Colonic mucosa (tissue), 4 donors: ENCODE measurements at regions of chr7 and their contacts with region 1.

Region 1: DNA sequence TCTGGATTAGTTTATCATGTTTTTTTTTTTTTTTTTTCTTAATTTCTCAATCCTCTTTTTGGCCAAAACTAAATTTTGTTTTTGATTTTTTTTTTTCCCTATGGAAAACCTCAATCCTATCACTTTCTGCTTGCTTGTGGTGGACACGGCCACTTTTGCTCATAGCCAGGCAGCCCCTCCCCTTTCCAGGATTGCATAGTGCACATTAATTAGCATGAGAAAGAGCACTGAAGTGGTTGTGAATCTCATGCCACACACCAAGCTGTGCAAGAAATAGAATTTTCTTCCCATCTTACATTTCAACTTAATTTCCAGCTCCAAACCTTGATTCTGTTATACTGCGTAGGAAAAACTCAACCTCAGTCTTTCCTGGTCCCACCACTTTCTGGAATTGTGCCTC is 34.6 kb downstream of the MGAM2 start:
- DNase-seq: no peak
- H3K4me3 ChIP-seq: no peak overlapping the region
- H3K27ac ChIP-seq: no peak overlapping the region
- H3K4me1 ChIP-seq: no peaks in the 10 kb centered on the region
- H3K27me3 ChIP-seq: no peaks in the 10 kb centered on the region
- CTCF ChIP-seq: no peak

Region 2: DNA sequence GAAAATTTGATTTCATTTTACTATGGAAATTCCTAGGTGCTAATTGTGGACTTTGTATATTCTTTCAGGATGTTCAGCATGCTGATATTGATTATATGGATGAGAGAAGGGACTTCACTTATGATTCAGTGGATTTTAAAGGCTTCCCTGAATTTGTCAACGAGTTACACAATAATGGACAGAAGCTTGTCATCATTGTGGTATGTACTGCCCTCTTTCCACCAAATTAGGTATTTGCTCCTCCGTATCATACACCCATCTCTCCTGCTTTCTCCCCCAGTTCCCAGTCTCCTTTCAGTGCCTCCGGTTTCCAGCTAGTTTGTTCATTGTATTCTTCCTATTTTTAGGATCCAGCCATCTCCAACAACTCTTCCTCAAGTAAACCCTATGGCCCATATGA is 115.8 kb before region 1 on chr7:
- intact Hi-C with region 1: no loop called
- DNase-seq: no peak
- H3K4me3 ChIP-seq: no peak overlapping the region
- H3K27ac ChIP-seq: no peak overlapping the region
- H3K4me1 ChIP-seq: no peaks in the 10 kb centered on the region
- H3K27me3 ChIP-seq: no peaks in the 10 kb centered on the region
- CTCF ChIP-seq: no peak

Region 3: DNA sequence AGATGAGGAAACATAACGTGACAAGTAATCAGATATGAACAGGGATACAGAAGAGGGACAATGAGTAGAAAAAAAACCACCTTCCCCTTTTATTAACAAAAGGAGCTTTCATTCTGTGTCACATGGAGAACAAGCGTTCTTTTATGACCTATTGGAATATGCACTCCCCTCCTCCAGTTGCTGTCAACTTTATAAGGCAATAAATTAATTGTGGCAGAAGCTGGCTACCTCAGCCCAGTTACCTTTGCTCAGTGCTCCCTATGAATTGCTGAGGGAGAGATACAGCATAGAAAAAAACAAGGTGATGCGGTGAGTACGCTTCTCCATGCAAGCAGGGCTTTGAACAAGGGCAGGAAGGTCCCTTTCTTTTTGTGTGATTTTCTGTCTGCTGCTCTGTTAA is 34.6 kb before region 1 on chr7 and contains the start of gene MGAM2:
- intact Hi-C with region 1: loop called (anchors 5 kb)
- DNase-seq: peak; percentile 46
- H3K4me3 ChIP-seq: no peak within 1 kb of the TSS
- H3K27ac ChIP-seq: no peak within 1 kb of the TSS
- H3K4me1 ChIP-seq: no peaks in the 10 kb centered on the region
- H3K27me3 ChIP-seq: no peaks in the 10 kb centered on the region
- CTCF ChIP-seq: no peak
- total RNA-seq, gene MGAM2: 7.5 to 26.4 TPM